AG04449 (cell line): ENCODE measurements at regions of chr15 and their contacts with region 1.

Region 1: DNA sequence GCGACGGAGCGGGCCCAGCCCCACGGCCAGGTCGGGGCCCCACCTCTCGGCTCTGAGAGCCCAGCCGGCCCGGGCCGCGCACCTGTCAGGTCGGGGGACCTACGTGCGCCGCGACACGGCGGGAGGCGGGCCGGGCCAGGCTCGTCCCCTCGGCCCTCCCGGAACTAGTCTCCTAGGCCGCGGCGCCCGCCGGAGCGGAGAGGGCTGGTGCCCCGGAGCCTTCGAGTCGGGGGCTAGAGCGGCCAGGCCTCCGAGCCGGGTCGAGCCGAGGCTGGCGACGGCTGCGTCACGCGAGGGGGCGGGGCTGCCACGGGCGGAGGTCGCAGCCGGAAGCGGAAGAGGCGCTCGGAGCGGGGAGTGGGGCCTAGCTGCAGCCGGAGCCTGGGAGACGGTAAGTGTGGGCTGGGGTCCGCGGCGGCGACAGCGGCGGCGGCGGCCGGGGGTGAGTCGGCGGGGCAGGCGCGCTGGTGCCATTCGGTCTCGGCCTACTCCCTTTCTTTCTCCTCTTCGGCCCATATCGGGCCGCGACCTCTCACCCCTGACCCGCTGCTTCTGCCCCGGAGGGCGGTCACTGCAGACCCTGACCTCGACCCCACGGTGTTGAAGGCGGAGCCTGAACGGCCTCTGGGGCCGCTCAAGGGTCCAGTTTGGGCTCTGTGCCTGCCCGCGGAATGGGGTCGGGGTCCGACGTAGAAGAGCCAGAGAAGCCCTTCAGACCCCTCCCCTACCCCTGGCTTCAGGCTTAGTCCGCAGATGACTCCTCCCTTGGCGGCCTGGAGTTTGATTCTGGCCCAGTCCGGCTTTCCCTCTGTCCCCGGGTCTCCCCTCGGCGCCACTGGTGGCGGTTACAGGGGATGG is at the start of gene CLK3:
- DNase-seq: peak; percentile 41
- H3K4me3 ChIP-seq: peak within 1 kb of the TSS; percentile 97
- CTCF ChIP-seq: no peak

Region 2: GRCh38 chr15:74598126-74598842 is 17.5 kb before region 1 on chr15:
- CTCF ChIA-PET with region 1: interaction called, 4 read pairs
- POLR2A ChIA-PET with region 1: interaction called, 22 read pairs
- DNase-seq: peak; percentile 23
- H3K4me3 ChIP-seq: peak overlapping the region; percentile 75
- CTCF ChIP-seq: no peak

Region 3: DNA sequence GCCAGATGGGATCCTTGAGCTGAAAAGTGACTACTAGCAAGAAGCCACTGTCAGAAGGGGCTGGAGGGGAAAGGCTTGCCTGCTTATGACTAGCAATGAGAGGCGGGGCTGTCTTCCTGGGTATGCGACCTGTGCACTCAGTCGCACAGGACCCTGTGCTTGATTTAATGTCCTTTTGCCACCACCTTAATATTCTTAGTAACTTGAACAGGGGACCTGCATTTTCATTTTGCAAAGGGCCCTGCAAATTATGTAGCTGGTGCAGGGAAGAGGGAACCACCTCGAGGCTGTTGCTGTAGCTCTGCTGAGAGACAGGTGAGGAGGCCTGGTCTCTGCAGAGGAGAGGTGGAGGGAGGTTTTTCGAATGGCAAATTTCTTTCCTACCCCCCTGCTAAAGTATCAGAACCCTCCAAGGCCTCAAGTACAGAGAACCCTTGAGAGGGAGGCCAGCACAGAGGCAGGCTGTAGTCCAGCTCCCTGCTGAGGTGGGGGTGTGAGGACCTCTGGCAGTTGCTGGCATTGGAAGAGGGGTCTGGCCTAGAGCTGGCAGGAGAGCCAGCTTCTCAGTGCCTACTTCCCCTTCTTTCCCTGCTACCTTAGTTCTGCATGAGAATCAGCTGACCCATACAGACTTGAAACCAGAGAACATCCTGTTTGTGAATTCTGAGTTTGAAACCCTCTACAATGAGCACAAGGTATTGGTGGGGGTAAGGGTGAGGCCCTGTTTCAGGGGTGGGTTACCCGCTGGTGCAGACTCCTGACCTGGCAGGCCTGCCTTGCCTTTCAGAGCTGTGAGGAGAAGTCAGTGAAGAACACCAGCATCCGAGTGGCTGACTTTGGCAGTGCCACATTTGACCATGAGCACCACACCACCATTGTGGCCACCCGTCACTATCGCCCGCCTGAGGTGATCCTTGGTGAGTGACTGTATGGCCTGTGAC is 11.3 kb after region 1 on chr15:
- CTCF ChIA-PET with region 1: interaction called, 338 read pairs
- POLR2A ChIA-PET with region 1: interaction called, 3 read pairs
- DNase-seq: no peak
- H3K4me3 ChIP-seq: no peak overlapping the region
- CTCF ChIP-seq: no peak